ENCODE measurements at regions of chr10 and their contacts with region 1.

Region 1: DNA sequence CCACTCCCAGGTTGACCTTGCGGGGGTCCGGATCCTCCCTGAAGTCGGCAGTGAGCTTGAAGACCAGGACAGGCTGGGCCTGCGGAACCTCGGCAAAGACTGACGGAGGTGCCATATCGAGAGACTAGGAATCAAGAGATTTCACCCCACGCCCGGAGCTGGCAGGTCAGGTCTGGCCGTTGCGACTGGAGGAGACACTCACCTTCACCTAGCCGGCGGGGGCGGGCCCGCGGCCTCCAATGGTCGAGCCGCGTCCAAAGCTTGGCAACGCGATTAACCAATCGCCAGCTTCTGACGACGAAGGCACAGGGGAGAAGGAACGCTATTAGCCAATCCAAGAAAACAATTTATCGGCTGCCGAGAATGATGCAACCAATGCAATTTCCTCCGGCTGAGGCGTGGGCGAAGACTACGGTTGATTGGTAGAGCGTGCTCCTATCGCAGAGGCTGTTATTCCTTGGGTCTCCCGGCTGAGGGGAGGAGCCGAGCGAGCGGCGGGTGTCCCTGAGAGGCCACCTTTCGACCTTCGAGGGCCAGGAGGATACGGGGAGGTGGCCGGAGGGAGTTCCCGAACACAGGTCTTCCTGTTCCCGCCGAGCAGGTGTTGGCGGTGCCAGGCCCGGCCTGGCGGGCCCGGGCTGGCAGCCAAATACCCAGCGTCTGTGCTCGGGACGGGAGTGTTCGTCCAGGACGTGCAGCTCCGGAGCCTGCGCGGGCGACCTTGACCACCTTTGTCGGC is at the start of gene GOT1:
- DNase-seq: peak; percentile 85
- ATAC-seq: peak; percentile 91
- H3K4me3 Mint-ChIP-seq: peak within 1 kb of the TSS; percentile 98
- H3K27ac Mint-ChIP-seq: peak within 1 kb of the TSS; percentile 92
- H3K4me1 Mint-ChIP-seq: peaks cover 29% of the 10 kb centered on the region
- H3K27me3 Mint-ChIP-seq: no peaks in the 10 kb centered on the region
- CTCF ChIP-seq: no peak
- total RNA-seq, gene GOT1: 30.1 and 31.4 TPM in 2 replicates

Region 2: GRCh38 chr10:99395750-99396445 is 34.7 kb before region 1 on chr10:
- CTCF ChIA-PET with region 1: interaction called, 8 read pairs
- POLR2A ChIA-PET with region 1: no interaction called
- intact Hi-C with region 1: loop called (anchors 1 kb)
- DNase-seq: no peak
- ATAC-seq: no peak
- H3K4me3 Mint-ChIP-seq: no peak overlapping the region
- H3K27ac Mint-ChIP-seq: no peak overlapping the region
- H3K4me1 Mint-ChIP-seq: no peaks in the 10 kb centered on the region
- H3K27me3 Mint-ChIP-seq: peaks cover 2% of the 10 kb centered on the region
- CTCF ChIP-seq: no peak

Measured in activated B cell treated with CpG ODN at 0.5 μM for 24 hours (primary cell).